Calu3 (cell line): ENCODE measurements at regions of chr3 and their contacts with region 1.

Region 1: GRCh38 chr3:49053543-49053942 is 24.3 kb upstream of the IMPDH2 start:
- DNase-seq: no peak
- H3K4me3 Mint-ChIP-seq: no peak overlapping the region
- H3K27ac Mint-ChIP-seq: no peak overlapping the region
- H3K4me1 Mint-ChIP-seq: peaks cover 8% of the 10 kb centered on the region
- H3K27me3 Mint-ChIP-seq: no peaks in the 10 kb centered on the region
- CTCF ChIP-seq: no peak

Region 2: GRCh38 chr3:49148159-49148558 is 94.6 kb after region 1 on chr3:
- CTCF ChIA-PET with region 1: interaction called, 10 read pairs
- intact Hi-C with region 1: no loop called
- DNase-seq: no peak
- H3K4me3 Mint-ChIP-seq: no peak overlapping the region
- H3K27ac Mint-ChIP-seq: no peak overlapping the region
- H3K4me1 Mint-ChIP-seq: no peaks in the 10 kb centered on the region
- H3K27me3 Mint-ChIP-seq: no peaks in the 10 kb centered on the region
- CTCF ChIP-seq: no peak